ENCODE measurements at regions of chr6 and their contacts with region 1.

Region 1: DNA sequence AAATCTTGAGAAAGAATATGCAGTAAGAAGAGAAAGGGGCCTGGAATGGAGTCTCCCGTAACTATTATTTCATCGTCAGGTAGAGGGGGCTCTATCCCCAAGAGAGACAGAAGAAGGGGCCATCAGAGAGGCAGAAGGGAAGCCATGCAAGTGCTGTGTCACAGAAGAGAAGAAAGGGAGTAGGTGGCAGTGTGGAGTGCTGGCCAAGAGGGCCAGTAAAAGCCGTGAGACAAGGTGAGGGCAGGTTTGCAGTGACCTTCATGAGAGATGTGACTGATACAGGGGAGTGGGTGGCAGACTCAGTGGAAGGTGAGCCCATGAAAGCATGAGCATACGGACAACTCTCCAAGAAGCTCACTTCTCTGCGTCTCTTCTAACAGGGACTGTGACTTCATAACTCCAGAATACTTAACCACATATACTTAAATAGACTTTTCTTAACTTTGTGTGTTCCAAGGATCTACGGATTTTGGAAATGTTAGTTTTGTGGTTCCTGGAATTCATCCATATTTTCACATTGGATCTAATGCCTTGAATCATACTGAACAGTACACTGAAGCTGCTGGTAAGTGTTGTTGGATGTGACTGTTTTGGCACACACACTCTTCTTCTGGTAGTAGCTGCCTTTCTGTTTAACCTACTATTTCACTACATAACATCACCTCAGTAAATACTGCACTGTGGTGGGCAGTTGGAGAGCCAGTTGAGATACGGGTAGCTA is 15.6 kb downstream of the PM20D2 start:
- DNase-seq: no peak
- ATAC-seq: no peak
- H3K4me3 ChIP-seq: no peak overlapping the region
- H3K4me3 Mint-ChIP-seq: no peak overlapping the region
- H3K27ac ChIP-seq: no peak overlapping the region
- H3K27ac Mint-ChIP-seq: no peak overlapping the region
- H3K4me1 ChIP-seq: no peaks in the 10 kb centered on the region
- H3K4me1 Mint-ChIP-seq: no peaks in the 10 kb centered on the region
- H3K27me3 ChIP-seq: no peaks in the 10 kb centered on the region
- H3K27me3 Mint-ChIP-seq: no peaks in the 10 kb centered on the region
- CTCF ChIP-seq: no peak

Region 2: GRCh38 chr6:89145787-89146646 is 15.5 kb before region 1 on chr6 and contains the start of gene PM20D2:
- CTCF ChIA-PET with region 1: no interaction called
- POLR2A ChIA-PET with region 1: interaction called, 15 read pairs
- intact Hi-C with region 1: no loop called
- DNase-seq: peak; percentile 33 to 78 (median 54)
- ATAC-seq: peak; percentile 73
- H3K4me3 ChIP-seq: peak within 1 kb of the TSS; percentile 74
- H3K4me3 Mint-ChIP-seq: peak within 1 kb of the TSS; percentile 99
- H3K27ac ChIP-seq: peak within 1 kb of the TSS; percentile 45 to 62
- H3K27ac Mint-ChIP-seq: peak within 1 kb of the TSS; percentile 93
- H3K4me1 ChIP-seq: peaks cover 12% of the 10 kb centered on the region
- H3K4me1 Mint-ChIP-seq: peaks cover 37% of the 10 kb centered on the region
- H3K27me3 ChIP-seq: no peaks in the 10 kb centered on the region
- H3K27me3 Mint-ChIP-seq: no peaks in the 10 kb centered on the region
- CTCF ChIP-seq: no peak
- total RNA-seq, gene PM20D2: 5.2 to 5.3 TPM